ENCODE measurements at regions of chr2 and their contacts with region 1.

Region 1: GRCh38 chr2:42047488-42048298 is at the start of gene PKDCC:
- DNase-seq: peak; percentile 89
- total RNA-seq, gene PKDCC: 74.7 TPM

Region 2: DNA sequence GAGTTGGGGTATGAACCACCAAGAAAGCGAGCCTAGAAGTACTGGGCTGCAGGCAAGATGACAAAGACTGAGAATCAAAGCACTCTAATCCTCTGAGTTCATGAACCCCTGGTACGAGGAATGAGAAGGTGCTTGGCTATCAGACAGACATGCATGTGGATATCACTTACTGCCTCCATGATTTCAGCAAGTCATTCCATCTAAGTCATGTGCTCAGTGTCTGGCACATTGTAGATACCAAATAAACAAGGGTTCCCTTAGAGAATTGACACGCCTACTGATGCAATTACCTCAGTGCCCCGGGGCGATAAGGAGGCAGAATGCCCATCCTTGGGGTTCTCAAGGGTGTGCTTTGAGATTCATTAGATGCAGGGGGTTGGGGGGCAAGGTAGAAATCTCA is 125.5 kb before region 1 on chr2:
- intact Hi-C with region 1: loop called (anchors 2 kb)
- DNase-seq: no peak

Region 3: GRCh38 chr2:41947701-41948396 is 99.8 kb before region 1 on chr2:
- intact Hi-C with region 1: loop called (anchors 5 kb)
- DNase-seq: no peak

Region 4: GRCh38 chr2:41966431-41966893 is 81.2 kb before region 1 on chr2:
- intact Hi-C with region 1: loop called (anchors 5 kb)
- DNase-seq: peak; percentile 85

Region 5: DNA sequence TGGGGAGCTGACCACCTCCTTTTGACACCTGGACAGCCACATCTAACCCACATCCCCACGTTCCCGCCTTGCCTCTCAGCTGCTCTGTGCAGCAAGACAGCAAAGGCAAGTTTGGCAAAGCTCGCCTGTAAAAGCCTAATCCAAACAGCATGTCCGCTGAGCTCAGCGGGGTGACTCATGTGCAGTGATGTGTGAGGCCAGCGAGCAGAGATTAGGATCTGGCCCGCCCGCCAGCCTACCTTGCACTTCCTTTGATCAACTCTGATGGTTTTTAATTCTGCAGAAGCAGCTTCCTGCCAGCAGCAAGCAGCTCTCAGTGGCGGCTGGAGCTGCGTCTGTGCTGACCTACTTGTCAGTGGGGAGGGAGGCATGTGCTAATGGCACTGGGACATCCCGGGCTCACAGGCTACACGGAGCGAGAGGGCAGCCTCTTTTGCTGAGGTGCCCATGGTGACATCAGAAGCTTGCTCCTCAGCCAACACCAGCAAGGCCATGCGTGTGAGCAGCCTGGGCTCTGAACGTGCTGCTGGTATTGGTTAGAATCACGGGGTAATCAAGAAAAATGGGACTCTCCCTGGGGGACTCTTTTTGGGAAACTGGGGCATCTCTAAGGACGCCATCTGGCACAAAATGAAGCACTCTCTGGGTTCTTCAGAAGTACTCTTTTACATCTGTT is 85.4 kb after region 1 on chr2:
- intact Hi-C with region 1: no loop called
- DNase-seq: peak; percentile 88

Measured in cardiac septum (tissue), 1 donor.